CD4-positive, alpha-beta T cell (primary cell): ENCODE measurements at regions of chrX and their contacts with region 1.

Region 1: DNA sequence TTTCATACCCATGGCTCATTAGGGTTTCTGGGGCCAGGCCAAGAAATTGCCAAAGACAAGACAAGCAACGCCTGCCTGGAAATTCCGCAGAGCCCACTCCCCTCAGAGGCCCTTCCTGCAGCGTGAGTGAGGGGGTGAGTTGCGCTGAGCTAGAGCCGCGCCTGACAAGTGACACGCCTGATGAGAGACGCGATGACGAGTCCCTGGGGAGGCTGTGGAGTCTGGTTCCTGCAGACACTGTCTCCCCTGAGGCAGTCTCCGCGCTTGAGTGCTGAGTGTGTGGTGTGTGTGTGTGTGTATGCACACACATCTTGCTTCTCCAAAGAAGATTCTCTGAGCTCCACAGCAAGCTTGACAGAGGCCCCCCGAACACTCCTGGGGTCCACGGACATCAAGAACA is 269.8 kb downstream of the BCOR start:
- DNase-seq: no peak
- ATAC-seq: no peak
- H3K4me3 ChIP-seq: no peak overlapping the region
- H3K4me3 Mint-ChIP-seq: no peak overlapping the region
- H3K27ac ChIP-seq: no peak overlapping the region
- H3K27ac Mint-ChIP-seq: no peak overlapping the region
- H3K4me1 ChIP-seq: no peaks in the 10 kb centered on the region
- H3K4me1 Mint-ChIP-seq: no peaks in the 10 kb centered on the region
- H3K27me3 ChIP-seq: no peaks in the 10 kb centered on the region
- H3K27me3 Mint-ChIP-seq: no peaks in the 10 kb centered on the region
- CTCF ChIP-seq: no peak

Region 2: GRCh38 chrX:39921838-39922237 is 93.9 kb after region 1 on chrX:
- CTCF ChIA-PET with region 1: no interaction called
- POLR2A ChIA-PET with region 1: no interaction called
- intact Hi-C with region 1: loop called in 1 of 2 experiments (anchors 5 kb)
- DNase-seq: no peak
- ATAC-seq: no peak
- H3K4me3 ChIP-seq: no peak overlapping the region
- H3K4me3 Mint-ChIP-seq: no peak overlapping the region
- H3K27ac ChIP-seq: no peak overlapping the region
- H3K27ac Mint-ChIP-seq: no peak overlapping the region
- H3K4me1 ChIP-seq: no peaks in the 10 kb centered on the region
- H3K4me1 Mint-ChIP-seq: no peaks in the 10 kb centered on the region
- H3K27me3 ChIP-seq: no peaks in the 10 kb centered on the region
- H3K27me3 Mint-ChIP-seq: no peaks in the 10 kb centered on the region
- CTCF ChIP-seq: no peak